HepG2 (cell line): ENCODE measurements at regions of chr18 and their contacts with region 1.

Region 1: DNA sequence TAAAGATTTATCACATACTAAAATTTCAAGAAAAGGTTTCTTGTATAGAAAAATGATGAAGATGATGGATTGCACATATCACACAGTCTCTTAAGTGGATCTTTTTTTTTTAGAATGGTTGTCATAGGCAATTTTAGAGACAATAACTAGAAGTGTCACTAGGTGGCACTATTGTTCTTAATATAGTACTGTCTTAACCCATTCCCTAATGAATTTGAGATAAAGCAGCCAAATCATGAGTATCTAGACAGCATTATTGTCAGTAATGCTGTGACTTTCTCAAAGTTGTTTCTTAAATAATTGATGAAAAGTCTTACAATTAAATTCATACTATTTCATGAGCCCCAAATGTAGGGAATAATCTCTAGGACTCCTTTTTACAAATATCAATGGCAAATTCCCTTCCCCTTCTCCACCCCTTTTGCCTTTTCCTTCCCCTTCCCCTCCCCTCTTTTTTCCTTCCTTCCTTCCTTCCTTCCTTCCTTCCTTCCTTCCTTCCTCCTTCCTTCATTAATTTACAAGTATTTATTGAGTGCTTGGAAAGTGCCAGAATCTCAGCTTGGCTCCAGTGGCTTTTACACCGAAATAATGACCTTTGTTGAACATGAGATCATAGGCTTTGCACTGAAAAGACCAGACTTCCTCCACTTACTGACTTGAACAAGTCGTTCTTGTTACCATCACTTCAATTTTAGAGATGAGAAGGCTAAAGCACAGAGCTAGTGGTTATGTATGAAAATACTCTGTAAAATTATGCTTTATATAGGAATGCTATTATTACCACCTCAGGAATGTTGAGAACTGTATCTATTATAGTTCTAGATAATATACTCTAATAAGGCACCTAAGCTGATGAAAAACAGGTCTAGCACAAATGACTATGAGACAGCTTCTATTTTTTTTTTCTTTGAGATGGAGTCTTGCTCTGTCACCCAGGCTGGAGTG is 19.8 kb downstream of the MYL12B start:
- DNase-seq: peak; percentile 67
- ATAC-seq: peak; percentile 64
- H3K4me3 ChIP-seq: no peak overlapping the region
- H3K27ac ChIP-seq: no peak overlapping the region
- H3K4me1 ChIP-seq: peaks cover 32% of the 10 kb centered on the region
- H3K27me3 ChIP-seq: peaks cover 0 to 17% of the 10 kb centered on the region in 2 experiments; a peak in 3 of 5 replicates
- CTCF ChIP-seq: peak; percentile 71
- EP300 ChIP-seq: no peak
- POLR2A ChIP-seq: no peak
- RAD21 ChIP-seq: peak; percentile 63

Region 2: DNA sequence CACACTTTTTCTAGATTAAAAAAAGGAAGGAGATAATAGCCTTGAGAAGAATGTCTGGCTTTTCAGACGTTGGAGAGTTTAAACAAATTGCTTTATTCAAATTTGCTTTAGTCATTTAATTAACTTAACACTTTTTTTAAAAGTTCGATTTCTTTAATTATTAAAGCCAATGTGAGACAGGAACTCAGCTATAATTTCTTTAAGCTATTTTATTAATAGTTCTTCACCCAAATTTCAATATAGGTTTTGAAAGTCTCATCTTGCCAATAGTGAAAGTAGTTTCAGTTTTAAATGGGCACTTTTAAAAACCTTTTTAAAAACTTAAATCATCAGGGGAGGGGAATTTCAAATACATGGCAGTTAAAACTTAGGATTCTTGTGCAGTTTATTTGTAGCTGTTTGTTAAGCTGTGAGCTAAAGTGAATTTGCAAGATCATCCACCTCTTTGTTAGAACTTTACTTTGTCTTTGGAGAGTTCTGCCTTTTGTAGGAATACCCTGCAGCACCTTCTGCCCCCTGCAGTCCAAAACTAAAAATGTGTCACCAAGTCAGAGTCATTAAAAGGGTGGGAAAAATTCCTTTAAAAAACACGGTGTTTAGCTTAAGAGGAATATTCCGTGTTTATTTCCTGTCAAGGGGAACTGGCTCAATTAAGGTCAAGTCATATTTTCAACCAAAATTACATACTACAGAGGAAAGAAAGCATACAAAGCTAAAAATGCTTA is 172.8 kb after region 1 on chr18:
- CTCF ChIA-PET with region 1: no interaction called
- POLR2A ChIA-PET with region 1: no interaction called
- in situ Hi-C with region 1: loop called (anchors 10 kb)
- intact Hi-C with region 1: loop called (anchors 1 kb)
- DNase-seq: peak; percentile 66
- ATAC-seq: no peak
- H3K4me3 ChIP-seq: peak overlapping the region; percentile 82 to 93 (median 93); a peak in 5 of 6 replicates
- H3K27ac ChIP-seq: peak overlapping the region; percentile 90
- H3K4me1 ChIP-seq: peaks cover 49% of the 10 kb centered on the region
- H3K27me3 ChIP-seq: no peaks in the 10 kb centered on the region; a peak in 1 of 5 replicates
- CTCF ChIP-seq: peak; percentile 67
- EP300 ChIP-seq: no peak
- POLR2A ChIP-seq: peak in 1 of 2 experiments; percentile 57; a peak in 2 of 4 replicates
- RAD21 ChIP-seq: peak; percentile 32; the same call in 1 of the 2 replicates

Region 3: GRCh38 chr18:3771121-3771971 is 489.6 kb after region 1 on chr18:
- CTCF ChIA-PET with region 1: interaction called, 4 read pairs
- POLR2A ChIA-PET with region 1: no interaction called
- in situ Hi-C with region 1: no loop called
- intact Hi-C with region 1: loop called (anchors 2 kb)
- DNase-seq: peak; percentile 48
- ATAC-seq: peak; percentile 100
- H3K4me3 ChIP-seq: no peak overlapping the region
- H3K27ac ChIP-seq: no peak overlapping the region
- H3K4me1 ChIP-seq: no peaks in the 10 kb centered on the region
- H3K27me3 ChIP-seq: peaks cover 0 to 18% of the 10 kb centered on the region in 2 experiments; a peak in 2 of 5 replicates
- CTCF ChIP-seq: peak; percentile 93
- EP300 ChIP-seq: no peak
- POLR2A ChIP-seq: no peak
- RAD21 ChIP-seq: peak; percentile 90

Region 4: GRCh38 chr18:3995476-3996102 is 713.9 kb after region 1 on chr18:
- CTCF ChIA-PET with region 1: interaction called, 9 read pairs
- POLR2A ChIA-PET with region 1: no interaction called
- in situ Hi-C with region 1: loop called (anchors 5 kb)
- intact Hi-C with region 1: loop called (anchors 1 kb)
- DNase-seq: peak; percentile 56
- ATAC-seq: peak; percentile 35; the same call in 1 of the 3 replicates
- H3K4me3 ChIP-seq: no peak overlapping the region
- H3K27ac ChIP-seq: no peak overlapping the region
- H3K4me1 ChIP-seq: no peaks in the 10 kb centered on the region
- H3K27me3 ChIP-seq: peaks cover 0 to 6% of the 10 kb centered on the region in 2 experiments; a peak in 1 of 5 replicates
- CTCF ChIP-seq: peak; percentile 67
- EP300 ChIP-seq: no peak
- POLR2A ChIP-seq: no peak
- RAD21 ChIP-seq: no peak